ENCODE measurements at regions of chr3 and their contacts with region 1.

Region 1: GRCh38 chr3:196528639-196529233 is 13.6 kb upstream of the SMCO1 start:
- DNase-seq: peak; percentile 54
- H3K4me3 ChIP-seq: peak overlapping the region; percentile 29 to 59 (median 38)
- H3K27ac ChIP-seq: peak overlapping the region; percentile 40
- H3K4me1 ChIP-seq: peaks cover 8% of the 10 kb centered on the region
- H3K27me3 ChIP-seq: no peaks in the 10 kb centered on the region
- CTCF ChIP-seq: peak; percentile 72 to 95
- POLR2A ChIP-seq: peak; percentile 61

Region 2: DNA sequence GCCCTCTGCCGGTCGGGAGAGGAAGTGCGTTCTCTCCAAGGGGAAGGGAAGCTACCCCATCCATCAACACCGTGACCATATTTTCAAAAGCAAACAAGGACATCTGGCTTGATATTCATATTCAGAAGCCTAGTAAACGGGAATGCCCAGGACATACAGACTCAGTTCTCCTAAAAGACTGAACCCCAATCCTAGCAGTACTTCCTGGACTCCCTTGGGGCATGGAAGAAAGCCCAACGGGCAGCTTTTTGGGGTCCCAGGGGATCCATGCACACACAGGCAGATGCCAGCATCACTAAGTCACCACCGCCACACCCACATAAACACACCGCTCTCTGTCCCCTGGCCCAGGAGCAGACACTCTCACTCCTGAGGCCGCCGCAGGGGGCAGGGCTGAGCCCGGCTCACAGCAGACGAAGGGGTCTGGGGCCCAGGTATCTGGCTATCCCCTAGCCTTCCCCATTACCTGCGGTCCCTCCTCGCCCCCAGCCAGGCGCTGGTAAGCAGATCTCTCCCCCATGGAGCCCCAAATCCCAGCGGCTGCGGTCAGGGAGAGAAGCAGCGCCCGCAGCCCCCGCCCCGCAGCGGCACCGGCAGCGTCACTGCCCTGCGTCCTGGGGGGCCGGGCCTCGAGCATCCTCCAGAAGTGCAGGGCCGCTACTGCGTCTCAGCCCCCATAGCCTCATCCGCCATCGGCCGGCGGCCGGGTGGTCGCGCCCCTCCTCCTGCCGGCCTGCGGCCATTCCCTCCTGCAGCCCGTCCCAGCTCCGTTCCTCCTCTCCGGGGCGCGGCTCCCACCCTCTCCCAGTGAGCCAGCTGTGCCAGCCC is 633.7 kb before region 1 on chr3:
- CTCF ChIA-PET with region 1: no interaction called
- POLR2A ChIA-PET with region 1: no interaction called
- dilution Hi-C with region 1: no loop called
- intact Hi-C with region 1: loop called (anchors 10 kb)
- DNase-seq: peak; percentile 77
- H3K4me3 ChIP-seq: peak overlapping the region; percentile 62 to 80 (median 76)
- H3K27ac ChIP-seq: peak overlapping the region; percentile 46
- H3K4me1 ChIP-seq: peaks cover 45% of the 10 kb centered on the region
- H3K27me3 ChIP-seq: no peaks in the 10 kb centered on the region
- CTCF ChIP-seq: peak; percentile 78 to 92
- POLR2A ChIP-seq: peak; percentile 42

Region 3: DNA sequence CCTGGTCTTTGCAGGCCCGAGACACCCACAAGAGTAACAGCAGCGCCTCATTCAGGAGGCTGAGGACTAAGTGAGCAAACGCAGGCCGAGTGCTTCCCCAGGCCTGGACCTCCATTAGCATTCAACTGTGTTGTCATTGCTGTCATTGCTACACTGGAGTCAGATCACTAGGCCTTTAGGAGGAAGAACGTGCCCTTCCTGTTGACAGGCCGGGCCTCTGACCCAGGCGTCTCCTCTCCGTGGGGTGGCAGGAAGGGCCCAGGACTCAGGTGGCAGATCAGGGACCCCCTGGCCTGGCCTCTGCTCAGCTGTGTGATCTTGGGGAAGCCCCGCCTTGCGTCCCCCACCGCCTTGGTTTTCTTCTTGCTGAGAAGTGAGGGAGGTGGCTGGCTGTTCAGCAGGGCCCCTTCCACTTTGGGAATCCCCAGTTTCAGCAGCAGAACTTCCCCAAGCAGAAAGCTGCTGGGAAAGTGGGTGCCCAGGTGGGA is 336.7 kb before region 1 on chr3:
- CTCF ChIA-PET with region 1: no interaction called
- POLR2A ChIA-PET with region 1: no interaction called
- dilution Hi-C with region 1: no loop called
- intact Hi-C with region 1: no loop called
- DNase-seq: no peak
- H3K4me3 ChIP-seq: no peak overlapping the region
- H3K27ac ChIP-seq: no peak overlapping the region
- H3K4me1 ChIP-seq: no peaks in the 10 kb centered on the region
- H3K27me3 ChIP-seq: no peaks in the 10 kb centered on the region
- CTCF ChIP-seq: no peak
- POLR2A ChIP-seq: no peak

Region 4: GRCh38 chr3:196486263-196486662 is 42.5 kb before region 1 on chr3:
- CTCF ChIA-PET with region 1: interaction called, 3 read pairs
- POLR2A ChIA-PET with region 1: interaction called, 10 read pairs
- dilution Hi-C with region 1: no loop called
- intact Hi-C with region 1: no loop called
- DNase-seq: peak; percentile 10
- H3K4me3 ChIP-seq: no peak overlapping the region
- H3K27ac ChIP-seq: no peak overlapping the region
- H3K4me1 ChIP-seq: no peaks in the 10 kb centered on the region
- H3K27me3 ChIP-seq: no peaks in the 10 kb centered on the region
- CTCF ChIP-seq: peak in 1 of 2 donors; percentile 31
- POLR2A ChIP-seq: no peak

Region 5: GRCh38 chr3:196568246-196569002 is 39.7 kb after region 1 on chr3 and contains the starts of genes FBXO45 and WDR53:
- CTCF ChIA-PET with region 1: interaction called, 14 read pairs
- POLR2A ChIA-PET with region 1: no interaction called
- dilution Hi-C with region 1: no loop called
- intact Hi-C with region 1: loop called (anchors 2 kb)
- DNase-seq: peak; percentile 97
- H3K4me3 ChIP-seq: peak within 1 kb of the TSS; percentile 24 to 95 (median 57)
- H3K27ac ChIP-seq: peak within 1 kb of the TSS; percentile 34
- H3K4me1 ChIP-seq: peaks cover 26% of the 10 kb centered on the region
- H3K27me3 ChIP-seq: no peaks in the 10 kb centered on the region
- CTCF ChIP-seq: no peak
- POLR2A ChIP-seq: peak; percentile 80
- total RNA-seq, gene FBXO45: 12.4 and 13.4 TPM in 2 replicates
- total RNA-seq, gene WDR53: 13.0 and 15.3 TPM in 2 replicates

Region 6: GRCh38 chr3:196694202-196694638 is 165.5 kb after region 1 on chr3:
- CTCF ChIA-PET with region 1: interaction called, 12 read pairs
- POLR2A ChIA-PET with region 1: no interaction called
- dilution Hi-C with region 1: no loop called
- intact Hi-C with region 1: no loop called
- DNase-seq: no peak
- H3K4me3 ChIP-seq: no peak overlapping the region
- H3K27ac ChIP-seq: no peak overlapping the region
- H3K4me1 ChIP-seq: no peaks in the 10 kb centered on the region
- H3K27me3 ChIP-seq: peaks cover 0 to 2% of the 10 kb centered on the region in 2 experiments
- CTCF ChIP-seq: no peak
- POLR2A ChIP-seq: no peak

Region 7: DNA sequence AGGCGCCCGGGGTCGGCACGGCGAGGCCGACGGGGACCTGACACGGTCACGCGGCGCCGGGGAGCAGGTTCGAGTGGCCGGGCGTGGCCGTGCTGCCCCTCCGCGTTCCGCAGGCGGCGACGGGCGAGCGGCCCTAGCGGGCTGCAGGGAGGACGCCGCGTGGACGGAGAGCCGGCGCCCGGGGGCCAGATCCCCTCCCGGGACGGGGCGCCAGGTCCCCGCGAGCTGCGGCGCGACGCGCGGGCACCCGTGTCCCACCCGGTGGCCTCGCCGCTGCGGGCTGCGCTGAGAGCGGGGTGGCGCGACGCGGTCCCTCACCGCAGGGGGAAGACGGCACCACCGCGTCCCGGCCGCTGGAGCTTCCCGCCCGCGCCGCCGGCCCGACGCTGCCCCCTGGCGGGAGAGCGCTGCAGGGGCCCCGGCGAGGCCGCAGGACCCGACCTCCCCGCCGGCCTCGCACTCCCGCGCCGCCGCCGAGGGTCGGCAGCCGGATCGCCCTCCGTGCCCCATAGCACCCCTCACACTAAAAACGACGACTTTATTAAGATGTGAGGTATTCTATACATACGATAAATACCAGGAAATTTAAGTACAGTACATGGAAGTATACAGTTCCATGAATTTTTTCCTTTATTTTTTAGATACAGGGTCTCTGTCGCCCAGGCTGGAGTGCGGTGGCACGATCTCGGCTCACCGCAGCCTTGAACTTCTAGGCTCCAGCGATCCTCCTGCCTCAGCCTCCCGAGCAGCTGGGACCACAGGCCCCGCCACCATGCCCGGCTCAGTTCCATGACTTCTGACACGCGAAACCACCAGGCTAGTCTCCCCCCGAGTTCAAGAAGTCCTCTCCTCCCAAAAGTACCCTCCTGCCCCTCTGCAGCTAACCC is 441.2 kb after region 1 on chr3:
- CTCF ChIA-PET with region 1: interaction called, 20 read pairs
- POLR2A ChIA-PET with region 1: no interaction called
- dilution Hi-C with region 1: no loop called
- intact Hi-C with region 1: loop called (anchors 5 kb)
- DNase-seq: peak; percentile 57
- H3K4me3 ChIP-seq: peak overlapping the region; percentile 60 to 81 (median 65)
- H3K27ac ChIP-seq: no peak overlapping the region
- H3K4me1 ChIP-seq: peaks cover 3% of the 10 kb centered on the region
- H3K27me3 ChIP-seq: peaks cover 0 to 2% of the 10 kb centered on the region in 2 experiments
- CTCF ChIP-seq: peak; percentile 59 to 68
- POLR2A ChIP-seq: peak; percentile 38